A549 (cell line): ENCODE measurements at regions of chr10 and their contacts with region 1.

Region 1: GRCh38 chr10:69237528-69238159 is 17.5 kb downstream of the HKDC1 start:
- DNase-seq: peak; percentile 66 to 81
- ATAC-seq: peak; percentile 95 to 99
- H3K4me3 ChIP-seq: no peak overlapping the region
- H3K27ac ChIP-seq: no peak overlapping the region; a peak in 1 of 6 replicates
- H3K4me1 ChIP-seq: peaks cover 6% of the 10 kb centered on the region
- CTCF ChIP-seq: peak; percentile 96
- EP300 ChIP-seq: no peak
- POLR2A ChIP-seq: no peak
- RAD21 ChIP-seq: peak; percentile 96 to 97

Region 2: GRCh38 chr10:69362468-69362954 is 124.9 kb after region 1 on chr10:
- CTCF ChIA-PET with region 1: interaction called, 14 read pairs
- POLR2A ChIA-PET with region 1: no interaction called
- DNase-seq: peak in 1 of 2 experiments; percentile 28
- ATAC-seq: no peak
- H3K4me3 ChIP-seq: no peak overlapping the region
- H3K27ac ChIP-seq: peak overlapping the region; percentile 77 to 84
- H3K4me1 ChIP-seq: peaks cover 51% of the 10 kb centered on the region
- CTCF ChIP-seq: no peak
- EP300 ChIP-seq: no peak
- POLR2A ChIP-seq: no peak
- RAD21 ChIP-seq: no peak

Region 3: DNA sequence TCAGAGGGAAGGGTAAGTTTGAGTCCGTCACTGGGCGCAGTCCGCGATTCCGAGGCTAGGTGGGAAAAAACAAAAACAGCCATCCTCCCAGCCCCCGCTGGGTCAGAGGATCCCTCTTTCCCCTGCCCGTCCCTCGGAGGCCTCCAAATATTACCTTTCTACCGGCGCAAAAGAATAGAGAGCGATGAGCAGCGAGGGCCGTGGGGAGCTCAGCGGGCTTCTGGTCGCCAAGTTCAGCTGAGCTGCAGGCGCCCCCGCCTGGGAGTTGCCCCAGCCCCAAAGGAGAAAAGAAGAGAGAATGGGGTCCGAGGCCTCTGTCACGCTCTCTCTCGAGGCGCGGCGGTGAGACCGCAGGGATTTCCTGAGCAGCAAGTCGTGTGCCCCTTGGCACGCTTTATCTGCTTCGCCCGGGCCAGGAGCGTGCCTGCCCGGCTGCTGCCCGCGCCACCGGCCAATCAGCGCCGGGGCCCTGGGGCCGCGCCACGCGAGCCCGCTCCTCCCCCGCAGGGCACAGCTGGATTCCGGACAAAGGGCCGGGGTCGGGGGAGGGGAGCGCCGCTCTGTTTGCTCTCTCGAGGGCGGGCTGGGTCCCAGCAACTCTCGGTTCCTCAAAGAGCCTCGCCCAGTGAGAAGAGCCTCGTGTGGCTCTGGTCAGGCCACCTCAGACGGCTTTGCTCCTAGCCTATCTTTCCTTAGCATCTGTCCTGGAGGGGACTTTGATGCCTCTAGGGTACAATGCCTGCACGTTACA is 335.6 kb after region 1 on chr10 and contains the start of gene NEUROG3:
- CTCF ChIA-PET with region 1: no interaction called
- POLR2A ChIA-PET with region 1: no interaction called
- DNase-seq: no peak
- ATAC-seq: peak in 1 of 2 experiments; percentile 29; a peak in 3 of 6 replicates
- H3K4me3 ChIP-seq: peak within 1 kb of the TSS; percentile 29; the same call in 1 of the 3 replicates
- H3K27ac ChIP-seq: no peak within 1 kb of the TSS
- H3K4me1 ChIP-seq: peaks cover 6% of the 10 kb centered on the region; the same call in 1 of the 3 replicates
- CTCF ChIP-seq: no peak
- EP300 ChIP-seq: no peak
- POLR2A ChIP-seq: no peak
- RAD21 ChIP-seq: no peak
- polyA plus RNA-seq, gene NEUROG3: not detected in 2 replicates